Esophagus muscularis mucosa (tissue), 4 donors: ENCODE measurements at regions of chr4 and their contacts with region 1.

Region 1: DNA sequence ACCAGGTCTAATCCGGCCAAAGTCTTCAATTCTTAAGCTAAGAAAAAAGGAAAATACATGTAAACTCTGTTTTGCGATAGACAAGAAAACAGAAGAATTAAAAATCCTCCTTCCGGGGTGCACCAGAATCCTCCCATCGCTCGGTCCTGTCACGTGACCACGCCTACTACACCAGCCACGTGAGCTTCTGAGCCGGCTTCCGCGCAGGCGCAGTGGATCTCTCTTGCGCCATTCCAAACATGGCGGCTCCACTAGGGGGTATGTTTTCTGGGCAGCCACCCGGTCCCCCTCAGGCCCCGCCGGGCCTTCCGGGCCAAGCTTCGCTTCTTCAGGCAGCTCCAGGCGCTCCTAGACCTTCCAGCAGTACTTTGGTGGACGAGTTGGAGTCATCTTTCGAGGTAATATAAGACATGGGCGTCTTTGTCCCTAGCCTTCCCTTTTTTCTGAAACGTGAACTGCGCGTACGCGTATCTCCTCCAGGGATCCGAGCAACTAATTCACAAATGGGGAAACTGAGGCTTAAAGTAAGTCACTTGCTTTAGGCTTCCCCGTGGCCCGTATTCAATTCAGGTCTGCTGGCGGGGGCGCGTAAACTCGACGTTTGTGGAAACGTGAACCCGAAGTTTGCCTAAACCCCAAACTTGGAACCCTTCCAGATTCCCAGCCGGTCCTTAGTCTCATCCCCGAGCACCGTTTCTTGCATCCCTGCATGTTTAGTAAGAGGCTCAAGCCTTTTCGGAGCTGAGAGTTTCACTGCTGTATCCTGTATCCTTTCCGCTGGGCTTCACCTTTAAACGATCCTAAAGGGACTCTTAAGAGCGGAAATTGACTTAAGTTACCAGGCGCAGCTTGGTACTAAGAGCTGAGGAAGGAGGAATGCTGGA is at the start of gene MED28:
- DNase-seq: peak; percentile 99
- H3K4me3 ChIP-seq: peak within 1 kb of the TSS; percentile 79 to 97 (median 88)
- H3K27ac ChIP-seq: peak within 1 kb of the TSS; percentile 84 to 89 (median 86)
- H3K4me1 ChIP-seq: peaks cover 31 to 52% (median 47%) of the 10 kb centered on the region in 4 donors
- H3K27me3 ChIP-seq: no peaks in the 10 kb centered on the region
- CTCF ChIP-seq: peak in 1 of 3 experiments; percentile 27
- EP300 ChIP-seq: no peak
- POLR2A ChIP-seq: peak; percentile 91
- total RNA-seq, gene MED28: 11.8 to 22.8 (median 14.2) TPM

Region 2: GRCh38 chr4:17468371-17469221 is 146.1 kb before region 1 on chr4:
- intact Hi-C with region 1: no loop called
- DNase-seq: no peak
- H3K4me3 ChIP-seq: no peak overlapping the region
- H3K27ac ChIP-seq: no peak overlapping the region
- H3K4me1 ChIP-seq: no peaks in the 10 kb centered on the region
- H3K27me3 ChIP-seq: no peaks in the 10 kb centered on the region
- CTCF ChIP-seq: peak in 2 of 3 experiments; percentile 29 to 55
- EP300 ChIP-seq: no peak
- POLR2A ChIP-seq: no peak

Region 3: GRCh38 chr4:17810260-17811077 is 195.8 kb after region 1 on chr4 and contains the starts of genes DCAF16 and NCAPG:
- intact Hi-C with region 1: loop called (anchors 5 kb)
- DNase-seq: peak; percentile 100
- H3K4me3 ChIP-seq: peak within 1 kb of the TSS; percentile 72 to 91 (median 80)
- H3K27ac ChIP-seq: peak within 1 kb of the TSS; percentile 94 to 98 (median 97)
- H3K4me1 ChIP-seq: peaks cover 37 to 54% (median 48%) of the 10 kb centered on the region in 4 donors
- H3K27me3 ChIP-seq: no peaks in the 10 kb centered on the region
- CTCF ChIP-seq: no peak
- EP300 ChIP-seq: no peak
- POLR2A ChIP-seq: peak; percentile 92
- total RNA-seq, gene DCAF16: 23.4 to 28.7 (median 26.3) TPM
- total RNA-seq, gene NCAPG: 0.17 to 0.98 (median 0.71) TPM in 3 of 4 donors, not detected in the other

Region 4: DNA sequence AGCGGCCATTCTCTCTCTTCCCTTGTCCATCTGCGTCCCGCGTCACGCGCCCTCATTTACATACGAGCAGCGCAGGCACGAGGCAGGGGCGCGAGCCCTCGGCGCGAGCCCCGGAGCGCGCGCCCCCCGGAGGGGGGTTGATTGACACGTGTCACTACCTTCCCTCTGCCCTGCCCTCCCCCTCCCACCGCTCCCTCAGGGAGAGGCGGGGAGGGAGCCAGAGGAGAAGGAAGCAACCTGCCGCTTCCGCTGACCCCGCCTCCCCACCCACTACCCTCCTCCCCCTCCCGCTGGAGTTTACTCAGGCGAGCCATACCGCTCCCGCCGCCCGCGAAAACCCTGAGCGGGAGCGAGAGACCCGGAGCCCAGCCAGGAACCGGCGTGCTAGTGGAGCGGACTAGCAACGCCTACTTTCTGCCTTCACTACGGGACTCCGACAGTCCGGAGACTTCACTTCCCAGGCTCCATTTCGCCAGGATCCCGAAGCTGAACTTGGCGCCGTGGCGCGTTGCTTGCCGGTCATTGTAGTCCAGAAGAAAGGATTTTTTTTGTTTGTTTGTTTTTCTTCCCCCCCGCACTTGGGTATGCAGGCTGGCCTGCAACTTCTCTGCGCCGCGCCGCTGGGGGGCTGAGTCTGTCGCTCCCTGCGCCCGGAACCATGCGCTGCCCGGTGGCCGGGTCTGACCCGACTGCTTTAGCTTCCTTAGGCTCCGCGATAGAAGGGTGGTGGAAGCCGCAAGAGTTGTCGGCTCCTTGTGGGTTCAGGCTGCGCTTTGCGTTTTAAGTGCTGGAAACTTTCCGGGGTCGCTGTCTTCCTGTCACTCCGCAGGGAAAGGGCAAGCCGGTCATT is 407.3 kb after region 1 on chr4 and contains the start of gene LCORL:
- intact Hi-C with region 1: loop called (anchors 10 kb)
- DNase-seq: peak; percentile 98
- H3K4me3 ChIP-seq: peak within 1 kb of the TSS; percentile 86 to 89 (median 88)
- H3K27ac ChIP-seq: peak within 1 kb of the TSS; percentile 93 to 98 (median 95)
- H3K4me1 ChIP-seq: peaks cover 10 to 23% (median 18%) of the 10 kb centered on the region in 4 donors
- H3K27me3 ChIP-seq: no peaks in the 10 kb centered on the region
- CTCF ChIP-seq: no peak
- EP300 ChIP-seq: no peak
- POLR2A ChIP-seq: no peak
- total RNA-seq, gene LCORL: 7.6 to 14.1 (median 11.5) TPM